ENCODE measurements at regions of chr2 and their contacts with region 1.

Region 1: DNA sequence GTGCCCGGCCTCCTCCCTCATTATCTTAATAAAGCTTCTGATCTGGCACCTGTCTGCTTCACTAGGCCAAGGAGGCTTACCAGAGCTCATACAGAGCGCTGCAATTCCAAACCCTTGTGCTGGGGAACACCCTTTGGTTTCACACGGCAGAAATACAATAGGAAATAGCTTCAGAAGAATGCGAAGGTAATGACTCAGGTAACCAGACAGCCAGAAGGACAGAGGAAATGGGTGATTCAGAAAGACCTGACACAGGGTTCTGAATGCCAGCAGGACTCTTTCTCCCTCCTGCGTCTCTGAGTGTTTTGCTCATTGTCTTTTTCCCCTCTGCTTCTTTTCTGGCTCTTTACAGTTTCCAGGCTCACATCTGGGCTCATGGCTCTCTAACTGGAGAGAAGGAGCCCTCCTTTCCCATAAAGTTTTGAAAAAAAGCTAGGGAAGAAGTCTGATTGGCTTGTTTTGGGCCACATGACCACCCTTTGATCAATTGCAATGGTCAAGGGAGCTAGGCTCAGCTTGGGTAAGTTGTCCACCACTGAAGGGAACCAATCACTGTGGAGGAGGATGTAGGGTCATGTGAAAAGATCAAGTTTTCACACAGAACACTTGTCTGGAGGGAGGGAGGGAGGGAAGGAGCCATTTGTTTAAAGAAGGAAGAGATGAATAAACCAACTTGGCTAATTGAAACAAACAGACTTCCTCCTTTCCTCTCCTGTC is 90.5 kb upstream of the UPP2 start:
- DNase-seq: no peak
- H3K4me3 ChIP-seq: no peak overlapping the region
- H3K27ac ChIP-seq: no peak overlapping the region
- H3K4me1 ChIP-seq: no peaks in the 10 kb centered on the region
- H3K27me3 ChIP-seq: peaks cover 0 to 9% (median 0%) of the 10 kb centered on the region in 3 donors
- CTCF ChIP-seq: no peak
- EP300 ChIP-seq: no peak
- POLR2A ChIP-seq: no peak

Region 2: DNA sequence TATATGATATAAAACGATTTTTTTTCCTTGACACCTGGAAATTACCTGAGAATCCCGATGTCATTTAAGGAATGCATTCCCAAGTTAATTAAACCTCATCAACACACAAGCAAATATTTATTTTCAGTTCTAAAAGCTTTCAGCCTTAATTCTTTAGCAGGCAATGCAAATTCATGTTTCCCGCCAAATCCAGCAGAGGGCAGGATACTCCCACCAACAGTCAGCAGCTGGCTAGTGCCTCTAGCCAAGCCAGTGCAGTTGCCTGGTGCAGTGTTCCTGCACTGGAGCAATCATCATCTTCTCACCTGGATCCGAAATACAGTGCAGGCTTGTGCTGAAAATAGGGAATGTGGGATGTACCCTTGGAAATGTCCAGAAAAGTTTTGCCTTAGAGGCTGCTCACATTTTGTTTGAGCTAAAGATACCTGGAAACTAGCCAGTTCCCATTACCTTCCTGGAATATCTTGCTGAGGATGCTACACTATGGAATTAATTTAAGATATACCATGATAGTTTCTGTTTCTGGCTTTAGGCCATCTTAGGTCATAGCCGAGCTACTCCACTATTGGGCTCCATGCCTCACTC is 518.9 kb before region 1 on chr2:
- intact Hi-C with region 1: loop called (anchors 2 kb)
- DNase-seq: peak; percentile 67
- H3K4me3 ChIP-seq: no peak overlapping the region
- H3K27ac ChIP-seq: no peak overlapping the region
- H3K4me1 ChIP-seq: no peaks in the 10 kb centered on the region
- H3K27me3 ChIP-seq: peaks cover 0 to 3% (median 0%) of the 10 kb centered on the region in 3 donors
- CTCF ChIP-seq: peak; percentile 15 to 54 (median 40)
- EP300 ChIP-seq: no peak
- POLR2A ChIP-seq: no peak

Region 3: DNA sequence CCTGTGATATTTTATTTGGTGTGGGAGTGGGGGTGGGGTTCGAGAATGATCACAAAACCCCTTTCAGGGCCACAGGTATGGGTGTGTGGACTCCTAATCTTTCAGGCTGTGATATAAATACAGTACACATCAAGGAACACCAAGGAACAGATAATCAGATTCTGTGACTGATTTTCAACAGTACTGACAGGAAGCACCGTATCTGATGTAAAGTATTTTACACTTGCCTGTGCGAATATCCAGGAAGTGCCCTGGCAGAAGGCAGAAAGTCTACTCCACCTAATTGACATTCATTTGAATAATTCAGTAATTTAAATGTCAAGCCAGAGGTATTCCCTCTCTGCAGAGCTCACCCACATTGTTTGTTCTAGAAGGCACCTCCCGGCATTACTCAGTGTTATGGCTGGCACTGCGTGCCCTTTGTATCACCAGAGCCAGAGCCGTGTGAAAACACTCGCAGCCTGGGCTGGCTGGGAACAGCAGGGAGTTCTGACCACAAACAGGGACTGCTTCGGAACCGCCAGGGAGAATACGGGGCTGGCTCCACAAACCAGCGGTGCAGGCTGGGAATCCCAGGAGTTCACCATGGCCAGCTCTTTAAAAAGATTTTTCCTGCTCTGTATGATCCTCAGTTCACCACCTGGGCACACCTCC is 226.9 kb before region 1 on chr2:
- intact Hi-C with region 1: loop called (anchors 2 kb)
- DNase-seq: peak; percentile 77
- H3K4me3 ChIP-seq: no peak overlapping the region
- H3K27ac ChIP-seq: peak overlapping the region; percentile 57 to 73 (median 68)
- H3K4me1 ChIP-seq: peaks cover 0 to 74% (median 62%) of the 10 kb centered on the region in 4 donors
- H3K27me3 ChIP-seq: no peaks in the 10 kb centered on the region
- CTCF ChIP-seq: no peak
- EP300 ChIP-seq: no peak
- POLR2A ChIP-seq: no peak

Region 4: DNA sequence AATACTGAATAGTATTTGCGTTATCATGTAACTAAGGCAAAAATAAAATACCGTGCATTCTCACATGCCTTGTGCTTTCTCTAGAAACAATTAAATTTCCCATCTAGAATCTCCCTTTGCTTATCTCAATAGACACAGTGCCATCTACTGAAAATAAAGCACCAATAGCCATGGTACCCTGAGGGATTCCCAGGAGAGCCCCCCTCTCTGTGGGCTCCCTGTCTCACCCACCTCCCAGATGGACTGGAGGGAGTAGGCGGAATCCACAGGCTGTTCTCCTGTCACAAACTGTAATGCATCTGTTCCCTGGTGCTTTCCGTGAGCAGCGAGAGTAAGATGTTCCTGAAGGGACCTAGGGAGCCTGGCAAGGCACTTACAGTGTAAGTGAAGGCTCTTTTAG is 22.0 kb before region 1 on chr2:
- intact Hi-C with region 1: no loop called
- DNase-seq: no peak
- H3K4me3 ChIP-seq: no peak overlapping the region
- H3K27ac ChIP-seq: no peak overlapping the region
- H3K4me1 ChIP-seq: no peaks in the 10 kb centered on the region
- H3K27me3 ChIP-seq: no peaks in the 10 kb centered on the region
- CTCF ChIP-seq: no peak
- EP300 ChIP-seq: no peak
- POLR2A ChIP-seq: no peak

Measured in sigmoid colon (tissue), 7 donors.